A549 (cell line): ENCODE measurements at regions of chr1 and their contacts with region 1.

Region 1: DNA sequence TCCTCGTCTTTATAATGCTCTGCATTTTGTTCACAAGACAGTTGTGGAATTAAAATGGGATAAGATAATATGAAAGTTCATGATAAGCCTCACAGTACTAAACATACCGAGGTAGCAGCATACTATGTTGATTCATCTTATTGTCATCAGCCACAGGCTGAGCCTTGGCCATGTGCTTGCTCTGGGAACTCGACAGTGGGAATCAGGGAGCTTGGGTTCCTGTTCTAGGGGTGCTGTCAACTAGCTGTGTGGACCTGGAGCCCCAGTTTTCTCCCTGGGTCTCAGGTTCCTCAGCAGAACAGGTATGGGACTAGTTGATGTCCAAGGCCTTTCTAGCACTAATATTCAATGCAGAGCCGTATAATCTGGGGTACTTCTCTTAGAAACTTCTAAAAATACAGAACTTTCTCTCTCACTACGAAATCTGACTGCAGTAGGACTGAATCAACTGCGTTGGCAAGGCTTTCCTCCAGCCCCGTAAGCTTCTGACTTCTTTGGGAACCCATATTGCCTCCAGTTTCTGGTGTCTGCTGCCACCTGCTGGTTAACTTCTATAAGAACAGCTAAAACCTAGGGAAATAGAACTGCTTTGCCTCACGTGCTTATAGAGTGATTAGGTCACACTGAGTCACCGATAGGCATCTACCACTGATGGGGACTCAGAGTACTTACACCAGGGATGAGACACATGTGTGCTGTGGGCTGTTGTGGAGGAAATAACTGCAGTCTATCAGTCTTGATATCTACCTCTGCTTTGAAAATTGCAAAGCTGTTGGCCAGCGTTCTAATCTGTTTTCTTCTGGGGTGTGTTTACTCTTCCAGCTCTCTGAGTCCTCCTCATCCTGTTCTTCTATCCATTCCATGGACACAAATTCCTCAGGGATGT is 110.9 kb downstream of the RGL1 start:
- DNase-seq: peak; percentile 81 to 87
- ATAC-seq: peak; percentile 96 to 98
- H3K4me3 ChIP-seq: no peak overlapping the region
- H3K27ac ChIP-seq: peak overlapping the region; percentile 57 to 78; a peak in 5 of 6 replicates
- H3K4me1 ChIP-seq: peaks cover 11% of the 10 kb centered on the region; the same call in 2 of the 3 replicates
- CTCF ChIP-seq: peak; percentile 95
- EP300 ChIP-seq: no peak
- POLR2A ChIP-seq: no peak
- RAD21 ChIP-seq: peak; percentile 97 to 98

Region 2: DNA sequence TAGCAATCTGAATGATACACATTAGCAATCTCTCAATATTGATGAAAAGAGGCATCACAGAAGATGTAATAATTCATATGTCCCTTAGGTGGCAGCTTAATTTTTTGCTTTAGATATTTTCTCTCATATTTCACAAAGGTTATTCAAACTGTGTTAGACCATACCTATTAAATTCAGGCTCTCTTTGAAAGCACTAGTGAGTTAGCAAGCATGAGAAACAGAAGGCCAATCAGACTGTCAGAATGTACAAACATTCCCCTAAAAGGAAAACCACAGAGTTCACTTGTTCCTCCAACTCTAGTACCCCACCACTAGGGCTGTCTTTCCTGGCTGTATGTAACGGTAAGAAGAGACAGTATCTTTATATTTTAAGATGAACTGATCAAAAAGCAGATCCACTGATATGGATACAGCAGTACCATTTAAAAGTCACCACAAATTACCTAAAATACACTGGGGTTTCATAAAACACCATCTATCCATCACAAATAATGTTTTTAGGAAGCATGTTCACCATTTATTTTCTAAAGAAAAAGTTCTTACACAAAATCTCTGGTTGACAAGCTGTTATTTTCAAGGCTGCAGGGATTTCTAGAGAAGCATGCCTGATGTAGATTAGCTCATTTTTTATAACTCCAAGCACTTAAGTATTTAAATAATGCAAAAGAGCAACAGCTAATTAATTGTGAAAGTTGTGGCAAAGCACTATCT is 282.1 kb before region 1 on chr1:
- CTCF ChIA-PET with region 1: interaction called, 12 read pairs
- POLR2A ChIA-PET with region 1: no interaction called
- DNase-seq: peak; percentile 61 to 83
- ATAC-seq: peak; percentile 41 to 56; a peak in 4 of 6 replicates
- H3K4me3 ChIP-seq: peak overlapping the region; percentile 96
- H3K27ac ChIP-seq: peak overlapping the region; percentile 98
- H3K4me1 ChIP-seq: peaks cover 30% of the 10 kb centered on the region
- CTCF ChIP-seq: peak; percentile 75
- EP300 ChIP-seq: no peak
- POLR2A ChIP-seq: no peak
- RAD21 ChIP-seq: peak in 1 of 2 experiments; percentile 28; a peak in 1 of 5 replicates

Region 3: GRCh38 chr1:183655562-183656075 is 260.2 kb before region 1 on chr1:
- CTCF ChIA-PET with region 1: interaction called, 142 read pairs
- POLR2A ChIA-PET with region 1: interaction called, 12 read pairs
- DNase-seq: peak; percentile 74 to 79
- ATAC-seq: peak; percentile 93 to 97
- H3K4me3 ChIP-seq: no peak overlapping the region
- H3K27ac ChIP-seq: peak overlapping the region; percentile 16 to 41; a peak in 2 of 6 replicates
- H3K4me1 ChIP-seq: peaks cover 4% of the 10 kb centered on the region; the same call in 1 of the 3 replicates
- CTCF ChIP-seq: peak; percentile 97
- EP300 ChIP-seq: no peak
- POLR2A ChIP-seq: no peak
- RAD21 ChIP-seq: peak; percentile 92 to 95

Region 4: DNA sequence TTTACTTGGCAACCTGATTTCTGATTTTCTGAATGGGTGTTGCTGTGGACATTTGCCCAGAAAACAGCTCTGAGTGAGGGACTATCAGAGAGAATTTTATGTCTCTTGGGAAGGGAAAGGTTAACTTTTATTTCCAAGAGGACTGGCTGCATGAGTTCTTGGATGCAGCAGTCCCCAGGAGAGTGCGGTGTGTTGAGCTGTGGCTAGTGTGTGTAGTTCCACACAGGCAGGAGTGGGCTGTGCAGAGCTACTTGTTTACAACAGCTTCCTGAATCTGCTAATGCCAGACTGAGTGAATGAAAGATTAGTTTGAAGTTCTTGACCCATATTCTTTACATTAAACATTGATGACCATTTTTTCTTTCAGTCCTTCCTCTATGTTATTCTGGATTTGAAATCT is 221.8 kb before region 1 on chr1:
- CTCF ChIA-PET with region 1: interaction called, 15 read pairs
- POLR2A ChIA-PET with region 1: no interaction called
- DNase-seq: no peak
- ATAC-seq: 0 out of 6 replicates have a peak, but pooled peaks of 1 of the 2 experiments have one; percentile 24
- H3K4me3 ChIP-seq: no peak overlapping the region
- H3K27ac ChIP-seq: no peak overlapping the region; a peak in 1 of 6 replicates
- H3K4me1 ChIP-seq: peaks cover 23% of the 10 kb centered on the region
- CTCF ChIP-seq: no peak
- EP300 ChIP-seq: no peak
- POLR2A ChIP-seq: no peak
- RAD21 ChIP-seq: no peak

Region 5: DNA sequence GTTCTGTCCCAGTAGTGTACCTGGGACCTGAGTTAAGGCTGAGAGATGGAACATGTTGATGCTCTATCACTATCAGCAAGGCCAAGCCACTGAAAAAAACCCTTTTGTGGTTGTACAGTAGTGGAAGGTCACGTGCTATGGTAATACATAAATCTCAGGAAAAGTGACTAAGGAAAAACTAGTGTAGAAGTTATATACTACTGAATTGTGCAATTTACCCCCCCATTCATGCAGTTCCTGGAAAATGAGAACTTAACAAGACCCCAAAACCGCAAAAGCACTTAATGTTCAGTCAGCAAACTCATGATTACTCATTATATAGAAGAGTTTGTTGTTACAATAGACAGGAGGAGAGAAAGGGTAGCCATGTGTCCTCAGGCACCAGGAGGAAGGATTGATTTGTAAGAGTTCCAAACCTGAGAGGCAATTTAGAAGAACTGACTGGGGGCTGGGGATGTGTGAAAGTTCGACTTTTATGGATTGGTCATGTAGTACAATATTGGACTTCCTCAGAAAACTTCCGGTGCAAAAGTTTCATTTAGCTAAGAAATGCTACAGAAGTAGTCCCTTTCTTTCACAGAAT is 19.3 kb before region 1 on chr1:
- CTCF ChIA-PET with region 1: interaction called, 12 read pairs
- POLR2A ChIA-PET with region 1: no interaction called
- DNase-seq: no peak
- ATAC-seq: no peak
- H3K4me3 ChIP-seq: no peak overlapping the region
- H3K27ac ChIP-seq: no peak overlapping the region
- H3K4me1 ChIP-seq: peaks cover 13% of the 10 kb centered on the region; the same call in 1 of the 3 replicates
- CTCF ChIP-seq: no peak
- EP300 ChIP-seq: no peak
- POLR2A ChIP-seq: no peak
- RAD21 ChIP-seq: no peak

Region 6: GRCh38 chr1:183926983-183927382 is 11.1 kb after region 1 on chr1:
- CTCF ChIA-PET with region 1: interaction called, 17 read pairs
- POLR2A ChIA-PET with region 1: no interaction called
- DNase-seq: no peak
- ATAC-seq: no peak
- H3K4me3 ChIP-seq: no peak overlapping the region
- H3K27ac ChIP-seq: no peak overlapping the region
- H3K4me1 ChIP-seq: no peaks in the 10 kb centered on the region
- CTCF ChIP-seq: no peak
- EP300 ChIP-seq: no peak
- POLR2A ChIP-seq: no peak
- RAD21 ChIP-seq: no peak

Region 7: GRCh38 chr1:184014271-184014670 is 98.4 kb after region 1 on chr1:
- CTCF ChIA-PET with region 1: no interaction called
- POLR2A ChIA-PET with region 1: no interaction called
- DNase-seq: no peak
- ATAC-seq: no peak
- H3K4me3 ChIP-seq: no peak overlapping the region
- H3K27ac ChIP-seq: no peak overlapping the region
- H3K4me1 ChIP-seq: no peaks in the 10 kb centered on the region
- CTCF ChIP-seq: no peak
- EP300 ChIP-seq: no peak
- POLR2A ChIP-seq: no peak
- RAD21 ChIP-seq: no peak